GM10248 (cell line): ENCODE measurements at regions of chr2 and their contacts with region 1.

Region 1: DNA sequence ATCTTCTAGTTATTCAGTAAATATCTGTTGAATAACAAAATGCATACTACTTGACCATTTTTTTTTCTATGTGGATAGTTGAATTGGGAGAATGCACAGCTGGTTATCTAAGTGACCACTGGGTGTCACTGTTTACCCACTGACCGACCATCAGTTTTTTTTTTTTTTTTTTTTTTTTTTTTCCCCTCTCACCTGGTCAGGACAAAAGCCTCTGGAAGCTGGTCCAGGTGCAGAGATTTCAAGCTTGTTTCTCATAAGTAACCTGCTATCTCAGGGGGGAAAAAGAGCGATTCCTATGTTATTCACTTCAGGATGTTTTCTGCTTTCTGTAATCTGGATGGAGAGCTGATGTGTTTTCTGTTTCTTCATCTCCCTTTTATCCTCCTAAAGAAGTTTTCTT is 256.0 kb downstream of the DCDC2C start:
- DNase-seq: peak; percentile 45
- CTCF ChIP-seq: peak; percentile 64

Region 2: DNA sequence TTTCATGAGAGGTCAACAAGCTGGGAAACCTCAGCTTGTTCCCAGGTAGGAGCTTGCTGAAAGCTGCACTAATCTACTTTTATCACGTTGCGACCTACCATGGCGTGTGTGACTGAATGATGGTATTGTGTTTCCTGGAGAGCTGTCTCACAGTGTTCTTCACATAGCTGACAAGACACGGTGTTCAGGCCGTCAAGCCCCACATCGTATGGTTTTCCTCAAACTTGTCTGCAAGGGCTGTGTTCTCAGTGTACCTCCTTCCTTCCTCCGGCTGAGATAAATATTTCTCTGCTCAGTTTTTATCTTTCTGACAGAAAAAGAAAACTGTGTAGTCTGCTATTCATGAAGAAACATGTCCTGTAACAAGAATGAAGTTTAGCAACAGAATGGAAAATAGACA is 11.2 kb before region 1 on chr2:
- CTCF ChIA-PET with region 1: interaction called, 12 read pairs
- POLR2A ChIA-PET with region 1: no interaction called
- DNase-seq: no peak
- CTCF ChIP-seq: no peak

Region 3: DNA sequence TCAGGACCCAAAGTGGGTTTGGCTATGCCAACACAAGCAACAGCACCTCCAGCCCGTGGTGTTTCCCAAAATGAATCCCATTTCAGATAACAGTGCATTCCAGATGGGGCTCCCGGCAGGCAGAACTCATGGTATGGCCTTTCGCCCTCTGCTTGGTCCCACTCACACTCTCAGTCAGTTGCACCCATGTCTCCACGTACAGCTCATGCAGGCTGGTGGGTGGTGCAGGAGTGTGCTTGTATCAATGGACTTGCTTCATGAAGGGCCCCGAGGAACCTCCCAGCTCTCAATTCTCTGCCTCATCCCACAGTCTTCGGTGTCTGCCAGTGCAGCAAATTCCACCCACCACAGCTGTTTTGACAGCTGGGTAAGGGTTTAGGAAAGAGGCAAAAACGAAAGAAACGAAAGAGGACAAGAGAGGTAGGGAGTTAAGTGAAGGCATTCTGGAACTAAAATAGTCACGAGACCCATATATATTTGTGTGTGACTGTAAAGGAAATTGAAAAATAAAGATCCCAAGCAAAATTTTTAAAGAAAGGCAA is 22.1 kb after region 1 on chr2:
- CTCF ChIA-PET with region 1: interaction called, 15 read pairs
- POLR2A ChIA-PET with region 1: no interaction called
- DNase-seq: no peak
- CTCF ChIP-seq: no peak